ENCODE measurements at regions of chr12 and their contacts with region 1.

Region 1: GRCh38 chr12:117236456-117237001 is 46.3 kb upstream of the FBXO21 start:
- DNase-seq: peak; percentile 80

Region 2: GRCh38 chr12:117587631-117588287 is 351.2 kb after region 1 on chr12:
- in situ Hi-C with region 1: loop called (anchors 25 kb)
- DNase-seq: peak; percentile 74

Measured in ACHN (cell line).